IMR-90 (cell line): ENCODE measurements at regions of chr20 and their contacts with region 1.

Region 1: GRCh38 chr20:34412453-34412852 is 49.4 kb downstream of the ITCH start:
- DNase-seq: no peak
- ATAC-seq: peak; percentile 17; the same call in 1 of the 2 replicates
- H3K4me3 ChIP-seq: no peak overlapping the region
- H3K27ac ChIP-seq: no peak overlapping the region
- H3K4me1 ChIP-seq: peaks cover 4% of the 10 kb centered on the region; the same call in 1 of the 2 replicates
- H3K27me3 ChIP-seq: no peaks in the 10 kb centered on the region
- CTCF ChIP-seq: no peak
- POLR2A ChIP-seq: no peak
- RAD21 ChIP-seq: no peak

Region 2: GRCh38 chr20:34377072-34377847 is 35.2 kb before region 1 on chr20:
- CTCF ChIA-PET with region 1: no interaction called
- POLR2A ChIA-PET with region 1: interaction called, 3 read pairs
- dilution Hi-C with region 1: no loop called
- in situ Hi-C with region 1: no loop called
- intact Hi-C with region 1: loop called (anchors 2 kb)
- DNase-seq: no peak
- ATAC-seq: no peak
- H3K4me3 ChIP-seq: no peak overlapping the region
- H3K27ac ChIP-seq: no peak overlapping the region
- H3K4me1 ChIP-seq: peaks cover 4% of the 10 kb centered on the region; the same call in 1 of the 2 replicates
- H3K27me3 ChIP-seq: no peaks in the 10 kb centered on the region
- CTCF ChIP-seq: no peak
- POLR2A ChIP-seq: no peak
- RAD21 ChIP-seq: no peak